ENCODE measurements at regions of chr17 and their contacts with region 1.

Region 1: DNA sequence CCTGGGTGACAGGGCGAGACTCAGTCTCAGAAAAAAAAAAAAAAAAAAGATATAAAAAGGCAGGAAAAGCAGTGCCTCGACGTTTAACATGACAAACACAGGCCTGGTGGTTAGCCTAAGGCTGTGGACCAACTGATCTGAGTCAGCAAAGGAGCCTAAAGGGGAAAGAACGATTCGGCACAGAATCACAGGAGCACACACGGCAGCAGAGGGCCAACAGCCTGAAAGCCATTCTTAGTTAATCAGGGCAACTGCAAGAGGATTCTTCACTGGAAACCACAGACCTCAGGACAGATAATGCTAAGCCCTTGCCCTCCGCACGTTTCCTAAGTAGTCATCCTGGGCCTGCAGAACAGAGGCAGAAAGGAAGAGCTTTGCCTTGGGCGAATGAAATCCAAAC is 14.7 kb downstream of the TMEM11 start:
- DNase-seq: peak; percentile 83
- H3K4me3 ChIP-seq: no peak overlapping the region
- H3K27me3 ChIP-seq: no peaks in the 10 kb centered on the region
- CTCF ChIP-seq: no peak

Region 2: GRCh38 chr17:21287596-21288449 is 88.5 kb after region 1 on chr17:
- CTCF ChIA-PET with region 1: no interaction called
- POLR2A ChIA-PET with region 1: interaction called, 17 read pairs
- DNase-seq: peak; percentile 76
- H3K4me3 ChIP-seq: peak overlapping the region; percentile 79
- H3K27me3 ChIP-seq: no peaks in the 10 kb centered on the region
- CTCF ChIP-seq: no peak